ENCODE measurements at regions of chr1 and their contacts with region 1.

Region 1: DNA sequence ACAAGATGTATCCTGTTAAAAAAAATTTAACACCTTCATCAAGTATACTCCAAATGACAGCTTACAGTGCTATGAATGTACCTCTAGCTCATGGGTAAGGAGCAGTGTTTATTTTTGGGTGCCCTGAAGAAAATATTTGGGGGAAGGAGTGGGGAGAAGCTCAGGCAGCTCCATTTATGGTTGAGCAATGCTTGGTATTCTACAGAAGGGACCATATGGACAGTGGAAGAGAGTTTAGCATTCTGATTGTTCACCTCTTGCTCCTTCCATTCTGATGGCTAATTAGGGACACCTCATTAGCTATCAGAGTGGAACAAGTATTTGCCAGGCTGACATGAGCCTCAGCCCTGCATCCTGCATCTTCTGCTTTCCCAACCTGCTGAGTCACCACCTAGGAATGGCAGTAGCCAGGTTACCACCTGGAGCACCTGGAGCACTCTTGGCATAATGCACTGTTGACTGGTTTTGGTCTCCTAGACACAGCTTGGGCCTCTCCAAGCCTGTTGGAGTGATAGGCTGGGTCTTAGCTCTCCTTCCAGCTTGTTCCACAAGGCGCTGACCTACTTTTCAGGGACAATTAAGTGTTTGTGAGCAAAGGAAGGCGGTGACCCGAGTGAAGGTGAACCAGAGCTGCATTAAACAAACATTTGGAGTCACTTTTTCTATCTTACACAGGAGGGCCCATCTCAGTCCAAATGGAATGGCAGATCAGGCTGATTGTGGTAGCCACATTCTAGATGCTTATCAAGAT is 61.9 kb upstream of the MACF1 start:
- DNase-seq: peak; percentile 41
- ATAC-seq: peak; percentile 63
- H3K4me3 Mint-ChIP-seq: no peak overlapping the region
- H3K27ac Mint-ChIP-seq: peak overlapping the region; percentile 97
- H3K4me1 Mint-ChIP-seq: peaks cover 62% of the 10 kb centered on the region
- H3K27me3 Mint-ChIP-seq: no peaks in the 10 kb centered on the region
- CTCF ChIP-seq: no peak

Region 2: DNA sequence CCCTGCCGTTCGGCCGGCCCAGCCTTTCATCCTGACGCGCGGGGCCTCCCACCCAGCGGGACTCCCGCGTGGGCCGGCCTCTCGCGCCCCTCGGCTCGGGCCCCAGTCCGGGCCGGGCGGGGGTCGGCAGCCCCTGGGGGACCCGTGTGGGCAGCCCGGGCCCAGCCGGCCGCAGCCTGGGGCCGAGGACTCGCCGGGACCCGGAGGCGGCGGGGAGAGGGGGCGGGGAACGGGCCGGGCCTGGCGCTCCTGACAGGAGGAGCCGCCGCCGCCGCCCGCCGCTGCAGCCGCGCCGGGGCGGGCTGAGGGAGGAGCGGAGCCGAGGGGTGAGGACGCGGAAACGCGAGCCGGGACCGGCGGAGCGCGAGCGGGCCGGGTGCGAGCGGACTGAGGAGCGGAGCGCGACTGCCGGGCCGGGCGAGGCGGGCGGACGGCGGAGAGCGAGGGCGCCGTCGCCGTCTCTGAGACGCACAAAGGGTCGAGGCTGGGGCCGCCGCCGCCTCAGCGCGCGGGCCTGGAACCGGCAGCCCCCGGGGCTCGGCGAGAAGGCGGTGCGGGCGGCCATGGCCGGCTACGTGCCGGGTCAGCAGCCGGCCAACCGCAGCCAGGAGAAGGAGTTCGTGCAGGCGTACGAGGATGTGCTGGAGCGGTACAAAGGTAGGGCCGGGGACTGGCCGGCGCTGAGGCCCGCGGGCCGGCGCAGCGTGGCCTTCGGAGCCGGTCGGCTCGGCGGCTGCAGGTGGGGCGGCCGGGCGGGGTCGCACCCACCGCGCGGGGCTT is 37.3 kb before region 1 on chr1:
- CTCF ChIA-PET with region 1: interaction called, 7 read pairs
- POLR2A ChIA-PET with region 1: interaction called, 20 read pairs
- DNase-seq: peak; percentile 70
- ATAC-seq: peak; percentile 19
- H3K4me3 Mint-ChIP-seq: peak overlapping the region; percentile 71
- H3K27ac Mint-ChIP-seq: no peak overlapping the region
- H3K4me1 Mint-ChIP-seq: peaks cover 40% of the 10 kb centered on the region
- H3K27me3 Mint-ChIP-seq: no peaks in the 10 kb centered on the region
- CTCF ChIP-seq: no peak

Region 3: DNA sequence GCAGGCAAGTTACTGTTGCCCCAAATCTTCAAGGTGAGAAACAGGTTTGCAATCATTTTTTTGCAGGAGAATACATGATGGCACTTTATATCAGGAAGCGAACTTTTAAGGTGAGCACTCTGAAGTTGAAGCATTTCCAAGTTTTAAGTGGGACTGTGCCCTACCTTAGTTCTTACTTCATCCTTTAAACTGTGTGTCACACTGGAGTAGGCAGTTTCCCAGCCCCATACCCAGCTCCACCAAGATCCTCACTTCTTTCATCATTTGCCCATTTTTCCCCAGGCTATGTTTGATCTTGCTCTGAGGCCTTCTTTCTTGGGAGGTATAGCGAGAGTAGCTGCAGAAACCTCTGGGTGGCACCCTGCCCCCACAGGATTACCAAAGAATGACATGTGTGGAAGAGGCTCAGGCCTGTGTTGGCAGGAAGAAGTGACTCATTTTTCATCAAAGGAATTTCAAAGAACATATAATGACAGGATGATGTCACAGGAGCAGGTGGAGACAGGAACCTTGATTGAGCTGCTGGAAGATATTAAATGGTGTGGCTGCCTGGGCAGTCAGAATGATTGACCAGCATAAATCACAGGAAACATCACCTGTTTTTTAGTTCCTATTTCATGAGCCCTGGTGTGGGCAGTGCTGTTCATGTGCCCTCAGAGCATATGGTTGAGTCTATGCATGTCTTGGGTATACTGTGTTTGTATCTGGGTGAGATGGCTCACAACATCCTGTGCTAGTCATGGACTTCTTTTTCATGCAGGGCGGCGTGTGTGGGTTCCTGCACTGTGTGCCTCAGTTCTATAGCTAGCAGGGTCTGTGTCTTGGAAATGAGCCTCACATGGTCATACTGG is 41.2 kb after region 1 on chr1:
- CTCF ChIA-PET with region 1: interaction called, 12 read pairs
- POLR2A ChIA-PET with region 1: no interaction called
- DNase-seq: peak; percentile 52
- ATAC-seq: peak; percentile 94
- H3K4me3 Mint-ChIP-seq: no peak overlapping the region
- H3K27ac Mint-ChIP-seq: peak overlapping the region; percentile 65
- H3K4me1 Mint-ChIP-seq: peaks cover 46% of the 10 kb centered on the region
- H3K27me3 Mint-ChIP-seq: no peaks in the 10 kb centered on the region
- CTCF ChIP-seq: no peak